Endothelial cell of umbilical vein (primary cell): ENCODE measurements at regions of chr12 and their contacts with region 1.

Region 1: GRCh38 chr12:65602610-65603295 is 221.5 kb upstream of the HMGA2 start:
- DNase-seq: peak; percentile 91
- H3K4me3 ChIP-seq: peak overlapping the region; percentile 18 to 77 (median 24)
- H3K27ac ChIP-seq: peak overlapping the region; percentile 95
- H3K4me1 ChIP-seq: peaks cover 50% of the 10 kb centered on the region
- H3K27me3 ChIP-seq: no peaks in the 10 kb centered on the region
- CTCF ChIP-seq: peak; percentile 58 to 78
- POLR2A ChIP-seq: peak; percentile 57

Region 2: GRCh38 chr12:65313719-65314317 is 288.9 kb before region 1 on chr12:
- CTCF ChIA-PET with region 1: interaction called, 13 read pairs
- POLR2A ChIA-PET with region 1: interaction called, 3 read pairs
- dilution Hi-C with region 1: no loop called
- intact Hi-C with region 1: no loop called
- DNase-seq: peak; percentile 48
- H3K4me3 ChIP-seq: no peak overlapping the region
- H3K27ac ChIP-seq: no peak overlapping the region
- H3K4me1 ChIP-seq: peaks cover 13% of the 10 kb centered on the region
- H3K27me3 ChIP-seq: no peaks in the 10 kb centered on the region
- CTCF ChIP-seq: peak; percentile 13 to 14
- POLR2A ChIP-seq: no peak

Region 3: DNA sequence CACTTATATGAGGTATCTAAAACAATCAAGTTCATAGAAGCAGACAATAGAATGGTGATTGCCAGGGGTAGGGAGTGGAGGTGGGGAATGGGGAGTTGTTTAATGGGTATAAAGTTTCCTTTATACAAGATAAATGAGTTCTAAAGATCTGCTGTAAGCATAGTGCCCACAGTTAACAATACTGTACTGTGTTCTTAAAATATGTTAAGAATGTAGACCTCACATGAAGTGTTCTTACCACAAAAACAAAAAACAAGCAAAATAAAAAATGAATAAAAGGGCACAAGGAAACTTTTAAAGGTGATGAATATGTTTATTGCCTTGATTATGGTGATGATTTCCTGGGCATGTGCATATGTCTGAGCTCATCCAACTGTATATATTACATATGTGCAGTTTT is 112.5 kb before region 1 on chr12:
- CTCF ChIA-PET with region 1: no interaction called
- POLR2A ChIA-PET with region 1: no interaction called
- dilution Hi-C with region 1: no loop called
- intact Hi-C with region 1: no loop called
- DNase-seq: peak; percentile 19
- H3K4me3 ChIP-seq: no peak overlapping the region
- H3K27ac ChIP-seq: no peak overlapping the region
- H3K4me1 ChIP-seq: no peaks in the 10 kb centered on the region
- H3K27me3 ChIP-seq: no peaks in the 10 kb centered on the region
- CTCF ChIP-seq: no peak
- POLR2A ChIP-seq: no peak

Region 4: GRCh38 chr12:65565601-65566560 is 36.9 kb before region 1 on chr12:
- CTCF ChIA-PET with region 1: interaction called, 34 read pairs
- POLR2A ChIA-PET with region 1: no interaction called
- dilution Hi-C with region 1: no loop called
- intact Hi-C with region 1: loop called (anchors 1 kb)
- DNase-seq: peak; percentile 33
- H3K4me3 ChIP-seq: no peak overlapping the region
- H3K27ac ChIP-seq: peak overlapping the region; percentile 53
- H3K4me1 ChIP-seq: peaks cover 49% of the 10 kb centered on the region
- H3K27me3 ChIP-seq: no peaks in the 10 kb centered on the region
- CTCF ChIP-seq: no peak
- POLR2A ChIP-seq: no peak

Region 5: DNA sequence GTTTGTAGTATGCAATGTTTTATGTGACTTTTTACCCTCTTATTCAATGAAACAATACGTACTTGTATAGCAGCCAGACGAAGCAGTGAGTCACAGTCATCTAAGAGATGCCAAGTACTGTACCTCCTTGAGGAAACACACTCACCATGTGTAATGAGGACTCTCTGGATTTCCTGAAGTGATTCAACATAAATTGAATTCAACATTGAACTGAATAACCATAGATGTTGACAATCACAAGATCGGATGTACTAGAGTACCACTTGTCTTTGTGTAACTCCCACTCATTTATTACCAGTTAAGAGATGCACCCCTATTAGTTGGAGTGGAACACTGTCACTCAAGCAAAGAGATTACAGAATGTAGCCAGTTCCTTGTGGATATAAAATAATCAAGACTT is 46.4 kb after region 1 on chr12:
- CTCF ChIA-PET with region 1: interaction called, 10 read pairs
- POLR2A ChIA-PET with region 1: no interaction called
- dilution Hi-C with region 1: no loop called
- intact Hi-C with region 1: loop called (anchors 1 kb)
- DNase-seq: peak; percentile 98
- H3K4me3 ChIP-seq: no peak overlapping the region
- H3K27ac ChIP-seq: peak overlapping the region; percentile 95
- H3K4me1 ChIP-seq: peaks cover 38% of the 10 kb centered on the region
- H3K27me3 ChIP-seq: no peaks in the 10 kb centered on the region
- CTCF ChIP-seq: no peak
- POLR2A ChIP-seq: no peak

Region 6: GRCh38 chr12:65695113-65695865 is 92.5 kb after region 1 on chr12:
- CTCF ChIA-PET with region 1: interaction called, 17 read pairs
- POLR2A ChIA-PET with region 1: no interaction called
- dilution Hi-C with region 1: no loop called
- intact Hi-C with region 1: loop called (anchors 2 kb)
- DNase-seq: peak; percentile 94
- H3K4me3 ChIP-seq: no peak overlapping the region
- H3K27ac ChIP-seq: peak overlapping the region; percentile 88
- H3K4me1 ChIP-seq: peaks cover 31% of the 10 kb centered on the region
- H3K27me3 ChIP-seq: no peaks in the 10 kb centered on the region
- CTCF ChIP-seq: no peak
- POLR2A ChIP-seq: peak; percentile 35

Region 7: DNA sequence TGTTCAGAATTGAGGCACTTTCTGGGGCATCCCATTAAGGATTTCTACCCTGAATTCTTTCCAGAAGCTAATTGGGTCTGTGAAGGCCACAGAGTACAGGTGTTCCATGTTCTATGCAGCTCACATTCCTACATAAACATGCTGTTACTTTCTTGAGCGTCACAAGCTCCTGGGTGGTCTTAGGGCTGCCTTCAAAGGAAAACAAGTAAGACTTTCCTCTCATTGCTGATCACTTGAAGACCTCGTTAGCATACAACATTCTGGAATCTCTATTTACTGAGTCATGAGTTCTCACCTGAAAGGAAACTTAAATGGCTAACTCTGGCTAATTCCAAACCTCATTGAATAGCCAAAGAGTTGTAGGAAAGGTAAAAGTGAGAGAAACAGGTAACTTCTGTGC is 158.5 kb after region 1 on chr12:
- CTCF ChIA-PET with region 1: no interaction called
- POLR2A ChIA-PET with region 1: no interaction called
- dilution Hi-C with region 1: no loop called
- intact Hi-C with region 1: no loop called
- DNase-seq: no peak
- H3K4me3 ChIP-seq: no peak overlapping the region
- H3K27ac ChIP-seq: no peak overlapping the region
- H3K4me1 ChIP-seq: peaks cover 2% of the 10 kb centered on the region
- H3K27me3 ChIP-seq: no peaks in the 10 kb centered on the region
- CTCF ChIP-seq: no peak
- POLR2A ChIP-seq: no peak

Region 8: DNA sequence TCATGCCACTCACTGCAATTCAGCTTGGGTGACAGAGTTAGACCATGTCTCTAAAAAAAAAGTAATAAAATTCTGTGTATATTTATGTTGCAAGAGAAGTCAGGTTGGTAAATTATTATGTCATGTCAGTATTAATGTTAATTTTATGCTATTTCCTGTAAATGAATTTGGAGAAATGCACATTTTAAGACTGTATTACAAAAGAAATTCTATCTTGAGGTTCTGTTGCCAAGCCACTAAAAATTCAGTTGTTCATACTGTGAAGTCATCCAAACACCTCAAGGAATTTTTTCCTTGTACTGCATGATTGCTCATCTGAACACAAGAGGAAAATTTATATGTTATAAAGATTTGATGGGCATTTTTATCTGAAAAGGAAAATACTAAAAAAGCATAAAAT is 198.2 kb after region 1 on chr12:
- CTCF ChIA-PET with region 1: no interaction called
- POLR2A ChIA-PET with region 1: no interaction called
- dilution Hi-C with region 1: no loop called
- intact Hi-C with region 1: no loop called
- DNase-seq: no peak
- H3K4me3 ChIP-seq: no peak overlapping the region
- H3K27ac ChIP-seq: no peak overlapping the region
- H3K4me1 ChIP-seq: peaks cover 3% of the 10 kb centered on the region
- H3K27me3 ChIP-seq: no peaks in the 10 kb centered on the region
- CTCF ChIP-seq: no peak
- POLR2A ChIP-seq: no peak

Region 9: GRCh38 chr12:65881965-65882413 is 279.2 kb after region 1 on chr12:
- CTCF ChIA-PET with region 1: interaction called, 16 read pairs
- POLR2A ChIA-PET with region 1: no interaction called
- dilution Hi-C with region 1: no loop called
- intact Hi-C with region 1: loop called (anchors 2 kb)
- DNase-seq: peak; percentile 91
- H3K4me3 ChIP-seq: peak overlapping the region in 2 of 3 experiments; percentile 0 to 16
- H3K27ac ChIP-seq: peak overlapping the region; percentile 70
- H3K4me1 ChIP-seq: peaks cover 93% of the 10 kb centered on the region
- H3K27me3 ChIP-seq: no peaks in the 10 kb centered on the region
- CTCF ChIP-seq: peak; percentile 32 to 53
- POLR2A ChIP-seq: no peak

Region 10: GRCh38 chr12:66087365-66087943 is 484.7 kb after region 1 on chr12:
- CTCF ChIA-PET with region 1: interaction called, 14 read pairs
- POLR2A ChIA-PET with region 1: no interaction called
- dilution Hi-C with region 1: no loop called
- intact Hi-C with region 1: loop called (anchors 1 kb)
- DNase-seq: peak; percentile 67
- H3K4me3 ChIP-seq: no peak overlapping the region
- H3K27ac ChIP-seq: no peak overlapping the region
- H3K4me1 ChIP-seq: peaks cover 2% of the 10 kb centered on the region
- H3K27me3 ChIP-seq: no peaks in the 10 kb centered on the region
- CTCF ChIP-seq: peak; percentile 65 to 76
- POLR2A ChIP-seq: no peak